Transverse colon (tissue), 4 donors: ENCODE measurements at regions of chr4 and their contacts with region 1.

Region 1: DNA sequence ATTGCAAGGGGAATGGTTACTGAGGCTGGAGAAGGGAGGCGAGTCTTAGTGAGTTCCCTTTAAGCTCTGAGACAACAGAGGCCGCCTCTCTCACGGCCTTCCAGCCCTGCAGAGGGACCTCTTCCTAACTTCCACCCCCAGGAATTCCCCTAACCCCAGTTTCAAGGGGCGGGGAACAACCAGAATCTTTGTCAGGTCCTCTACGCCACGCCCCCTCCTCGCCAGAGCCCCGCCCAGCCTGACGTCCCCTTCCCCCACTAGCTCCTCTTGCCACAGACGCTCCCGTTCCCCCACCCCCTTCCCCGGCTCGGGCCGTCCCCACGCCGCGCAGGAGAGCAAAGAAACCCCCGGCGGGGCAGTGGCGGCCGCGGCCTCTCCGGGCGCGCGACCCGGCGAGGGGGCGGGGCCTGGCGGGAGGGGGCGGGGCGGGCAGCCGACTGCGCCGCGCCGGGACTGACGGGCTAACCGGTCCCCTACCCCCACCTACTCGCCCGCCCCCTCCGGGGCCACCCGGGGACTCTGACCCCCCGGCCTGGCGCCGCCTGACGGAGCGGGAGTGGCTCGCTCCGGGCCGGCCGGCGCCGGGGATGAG is 12.3 kb upstream of the TMEM156 start:
- DNase-seq: peak; percentile 94
- H3K4me3 ChIP-seq: peak overlapping the region; percentile 64 to 92 (median 86)
- H3K27ac ChIP-seq: peak overlapping the region; percentile 90 to 95 (median 94)
- H3K4me1 ChIP-seq: peaks cover 2 to 37% (median 17%) of the 10 kb centered on the region in 4 donors
- H3K27me3 ChIP-seq: peaks cover 4% of the 10 kb centered on the region
- CTCF ChIP-seq: no peak
- EP300 ChIP-seq: no peak
- POLR2A ChIP-seq: peak; percentile 8

Region 2: DNA sequence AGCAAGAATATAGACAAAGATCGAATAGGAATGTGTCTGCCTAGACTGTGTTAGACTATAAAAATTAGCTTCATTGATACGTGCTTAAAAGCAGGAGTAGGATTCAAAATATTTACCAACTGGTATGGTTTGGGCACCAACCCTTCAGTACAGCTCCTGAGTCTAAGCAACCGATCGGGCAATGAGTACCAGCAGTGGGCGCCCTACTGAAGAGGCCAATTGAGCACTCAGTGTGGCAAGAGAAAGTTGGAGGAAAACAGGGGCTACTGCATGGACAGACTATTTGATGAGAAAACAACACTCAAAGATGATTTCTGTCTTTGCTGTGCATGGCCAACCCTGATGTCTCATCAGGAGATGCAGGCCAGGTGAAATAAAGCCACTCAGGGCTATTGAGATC is 1975.9 kb before region 1 on chr4:
- in situ Hi-C with region 1: no loop called
- intact Hi-C with region 1: no loop called
- DNase-seq: no peak
- H3K4me3 ChIP-seq: no peak overlapping the region
- H3K27ac ChIP-seq: no peak overlapping the region
- H3K4me1 ChIP-seq: no peaks in the 10 kb centered on the region
- H3K27me3 ChIP-seq: no peaks in the 10 kb centered on the region
- CTCF ChIP-seq: no peak
- EP300 ChIP-seq: no peak
- POLR2A ChIP-seq: no peak

Region 3: GRCh38 chr4:38949411-38950051 is 94.9 kb before region 1 on chr4:
- in situ Hi-C with region 1: no loop called
- intact Hi-C with region 1: loop called (anchors 10 kb)
- DNase-seq: no peak
- H3K4me3 ChIP-seq: no peak overlapping the region
- H3K27ac ChIP-seq: peak overlapping the region; percentile 46 to 80 (median 74)
- H3K4me1 ChIP-seq: peaks cover 5 to 22% (median 16%) of the 10 kb centered on the region in 4 donors
- H3K27me3 ChIP-seq: no peaks in the 10 kb centered on the region
- CTCF ChIP-seq: no peak
- EP300 ChIP-seq: no peak
- POLR2A ChIP-seq: no peak

Region 4: GRCh38 chr4:39083164-39083563 is 38.7 kb after region 1 on chr4:
- in situ Hi-C with region 1: no loop called
- intact Hi-C with region 1: no loop called
- DNase-seq: no peak
- H3K4me3 ChIP-seq: no peak overlapping the region
- H3K27ac ChIP-seq: no peak overlapping the region
- H3K4me1 ChIP-seq: no peaks in the 10 kb centered on the region
- H3K27me3 ChIP-seq: no peaks in the 10 kb centered on the region
- CTCF ChIP-seq: no peak
- EP300 ChIP-seq: no peak
- POLR2A ChIP-seq: no peak